GM23248 (cell line): ENCODE measurements at regions of chrX and their contacts with region 1.

Region 1: DNA sequence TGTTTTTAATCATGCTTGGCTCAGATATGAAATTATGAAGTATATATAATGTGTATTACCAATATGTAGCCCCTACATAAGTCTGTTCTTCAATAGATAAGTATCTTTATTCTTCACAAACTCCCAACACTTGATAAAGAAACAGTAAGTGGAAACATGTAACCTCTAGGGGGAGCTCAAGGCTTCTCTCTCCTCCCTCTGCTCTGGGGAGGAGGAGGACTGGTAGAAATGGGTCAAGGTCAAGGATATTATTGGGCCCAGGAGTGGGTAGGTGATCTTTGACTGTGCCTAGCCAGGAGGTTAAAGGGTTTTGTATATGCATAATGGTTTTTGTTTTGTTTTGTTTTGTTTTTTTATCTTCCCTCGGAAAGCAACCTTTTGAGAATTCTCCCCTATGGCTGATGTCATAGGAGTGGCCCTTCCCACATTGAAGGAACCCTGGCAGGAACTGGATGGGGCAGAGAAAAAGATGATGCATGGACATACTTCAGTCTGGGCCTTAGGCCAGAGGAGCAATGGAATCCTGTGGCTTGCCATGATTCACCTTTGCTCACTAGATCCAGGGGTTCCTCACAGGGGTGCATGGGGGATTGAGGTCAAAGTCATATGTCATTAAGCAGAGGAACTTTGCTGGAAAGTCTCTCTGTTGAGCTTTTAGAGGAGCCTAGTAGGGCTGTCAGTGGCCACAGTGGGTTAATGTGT is 460.3 kb downstream of the MID1IP1 start:
- DNase-seq: peak; percentile 85
- H3K4me3 ChIP-seq: no peak overlapping the region; the same call in 1 of the 2 replicates
- H3K27ac ChIP-seq: peak overlapping the region; percentile 29
- H3K4me1 ChIP-seq: peaks cover 12% of the 10 kb centered on the region
- H3K27me3 ChIP-seq: no peaks in the 10 kb centered on the region

Region 2: GRCh38 chrX:39361736-39362135 is 100.1 kb after region 1 on chrX:
- in situ Hi-C with region 1: loop called (anchors 25 kb)
- DNase-seq: peak; percentile 1
- H3K4me3 ChIP-seq: no peak overlapping the region
- H3K27ac ChIP-seq: no peak overlapping the region
- H3K4me1 ChIP-seq: no peaks in the 10 kb centered on the region
- H3K27me3 ChIP-seq: no peaks in the 10 kb centered on the region